Esophagus muscularis mucosa (tissue), 4 donors: ENCODE measurements at regions of chr18 and their contacts with region 1.

Region 1: DNA sequence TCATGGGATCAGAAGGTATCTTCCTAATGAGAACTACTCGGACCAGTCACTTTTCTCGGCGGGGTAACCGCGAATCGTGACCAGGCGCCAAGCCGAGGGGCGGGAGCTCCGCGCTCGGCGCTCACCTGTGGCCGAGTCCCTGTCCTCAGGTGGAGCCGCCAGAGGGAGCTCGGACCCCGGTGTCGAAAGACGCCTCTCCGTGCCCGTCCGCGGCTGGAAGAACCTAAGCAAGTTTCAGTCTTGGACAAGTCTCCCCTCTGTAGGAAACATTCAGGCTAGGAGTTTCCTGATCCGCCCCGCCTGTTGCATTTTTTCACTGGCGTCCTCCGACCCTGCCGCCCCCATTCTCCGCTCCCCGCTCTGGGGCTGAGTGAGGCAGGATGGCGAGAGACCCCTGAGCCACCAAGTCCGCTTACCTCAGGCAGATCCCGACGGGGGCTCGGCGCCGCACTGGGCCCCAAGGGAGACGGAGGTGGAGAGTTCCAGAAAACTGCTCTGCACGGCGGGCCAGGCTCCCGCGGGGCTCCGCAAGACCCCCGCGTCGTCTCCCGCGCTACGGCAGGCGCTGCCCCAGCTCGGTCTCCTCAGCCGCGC is 478 bp downstream of the DSEL start:
- DNase-seq: peak; percentile 96
- H3K4me3 ChIP-seq: peak overlapping the region; percentile 82 to 96 (median 88)
- H3K27ac ChIP-seq: peak overlapping the region; percentile 89 to 93 (median 91)
- H3K4me1 ChIP-seq: peaks cover 12 to 48% (median 44%) of the 10 kb centered on the region in 4 donors
- H3K27me3 ChIP-seq: no peaks in the 10 kb centered on the region
- CTCF ChIP-seq: peak; percentile 68 to 80 (median 76)
- EP300 ChIP-seq: no peak
- POLR2A ChIP-seq: no peak

Region 2: GRCh38 chr18:67217551-67218166 is 298.4 kb before region 1 on chr18:
- intact Hi-C with region 1: loop called (anchors 10 kb)
- DNase-seq: no peak
- H3K4me3 ChIP-seq: no peak overlapping the region
- H3K27ac ChIP-seq: no peak overlapping the region
- H3K4me1 ChIP-seq: no peaks in the 10 kb centered on the region
- H3K27me3 ChIP-seq: peaks cover 0 to 5% (median 0%) of the 10 kb centered on the region in 4 donors
- CTCF ChIP-seq: peak; percentile 72 to 84 (median 83)
- EP300 ChIP-seq: no peak
- POLR2A ChIP-seq: no peak

Region 3: GRCh38 chr18:67568166-67568565 is 52.1 kb after region 1 on chr18:
- intact Hi-C with region 1: no loop called
- DNase-seq: no peak
- H3K4me3 ChIP-seq: no peak overlapping the region
- H3K27ac ChIP-seq: no peak overlapping the region
- H3K4me1 ChIP-seq: no peaks in the 10 kb centered on the region
- H3K27me3 ChIP-seq: no peaks in the 10 kb centered on the region
- CTCF ChIP-seq: no peak
- EP300 ChIP-seq: no peak
- POLR2A ChIP-seq: no peak

Region 4: GRCh38 chr18:67710639-67711038 is 194.6 kb after region 1 on chr18:
- intact Hi-C with region 1: loop called (anchors 10 kb)
- DNase-seq: no peak
- H3K4me3 ChIP-seq: no peak overlapping the region
- H3K27ac ChIP-seq: no peak overlapping the region
- H3K4me1 ChIP-seq: no peaks in the 10 kb centered on the region
- H3K27me3 ChIP-seq: no peaks in the 10 kb centered on the region
- CTCF ChIP-seq: peak in 1 of 3 experiments; percentile 24
- EP300 ChIP-seq: no peak
- POLR2A ChIP-seq: no peak